Activated CD4-positive, alpha-beta memory T cell treated with anti-CD3 and anti-CD28 coated beads, Interleukin-2, amount 10 ng/mL, durations not matched to agents 7 days and 5 days (primary cell): ENCODE measurements at regions of chr20 and their contacts with region 1.

Region 1: DNA sequence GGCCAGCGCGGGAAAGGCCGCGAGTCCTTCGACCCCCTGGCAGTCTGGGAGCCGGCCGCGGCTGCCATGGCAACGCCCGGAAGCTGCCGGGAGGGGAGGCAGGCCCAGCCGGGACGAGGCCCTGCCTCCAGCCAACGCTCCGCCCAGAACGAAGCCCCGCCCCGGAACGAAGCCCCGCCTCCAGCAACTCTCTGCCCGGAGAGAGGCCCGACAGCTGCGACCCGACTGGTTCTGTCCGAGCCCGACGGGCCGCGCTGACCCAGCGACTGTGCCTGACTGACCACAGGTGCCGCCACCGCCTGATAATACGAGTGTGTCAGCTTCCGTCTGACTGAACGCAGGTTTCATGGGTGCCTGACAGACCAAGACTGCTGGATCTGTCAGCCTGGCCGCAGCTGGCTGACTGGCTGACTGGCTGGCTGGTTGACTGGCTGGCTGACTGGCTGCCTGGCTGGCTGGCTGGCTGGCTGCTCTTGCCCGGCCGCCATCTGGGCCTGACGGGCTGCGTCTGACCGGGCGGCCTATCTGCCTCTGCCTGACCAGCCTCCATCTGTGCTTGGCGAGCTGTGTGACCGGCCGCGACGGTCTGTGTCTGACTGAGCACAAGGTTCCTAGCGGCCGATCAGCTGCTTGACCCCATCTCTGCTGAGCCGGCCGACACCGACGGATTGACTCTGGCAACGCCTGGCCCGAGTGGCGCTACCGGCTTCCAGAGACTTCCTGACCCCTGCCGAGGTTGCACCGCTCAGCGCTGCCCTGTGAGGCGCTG is 89.7 kb upstream of the EPB41L1 start:
- DNase-seq: peak; percentile 93
- H3K4me3 Mint-ChIP-seq: peak overlapping the region; percentile 80
- H3K27ac Mint-ChIP-seq: no peak overlapping the region
- H3K4me1 Mint-ChIP-seq: peaks cover 9% of the 10 kb centered on the region
- H3K27me3 Mint-ChIP-seq: peaks cover 32% of the 10 kb centered on the region

Region 2: GRCh38 chr20:36050436-36051317 is 14.2 kb before region 1 on chr20:
- CTCF ChIA-PET with region 1: no interaction called
- POLR2A ChIA-PET with region 1: interaction called, 22 read pairs
- DNase-seq: peak; percentile 90
- H3K4me3 Mint-ChIP-seq: peak overlapping the region; percentile 85
- H3K27ac Mint-ChIP-seq: peak overlapping the region; percentile 91
- H3K4me1 Mint-ChIP-seq: peaks cover 42% of the 10 kb centered on the region
- H3K27me3 Mint-ChIP-seq: peaks cover 9% of the 10 kb centered on the region